ENCODE measurements at regions of chr5 and their contacts with region 1.

Region 1: DNA sequence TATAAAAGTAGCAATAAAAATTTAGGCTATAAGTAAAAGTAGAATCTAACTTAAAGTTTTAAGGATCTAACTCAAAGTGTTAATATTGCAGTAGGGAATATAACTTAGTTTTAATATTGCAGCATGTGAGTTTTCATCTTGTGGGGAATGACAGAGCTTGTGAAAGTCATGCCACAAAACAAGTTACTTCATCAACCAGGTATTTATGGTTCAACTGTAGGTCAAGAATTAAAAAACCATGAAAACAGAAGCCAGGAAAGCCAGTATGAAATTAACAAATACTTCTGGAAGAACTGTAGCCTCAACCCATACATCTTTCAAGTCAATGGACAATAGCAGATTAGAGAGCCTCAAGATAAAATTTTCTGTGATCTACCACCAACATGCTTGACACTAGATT is 19.0 kb downstream of the HMGCS1 start:
- DNase-seq: no peak
- CTCF ChIP-seq: no peak

Region 2: GRCh38 chr5:43268188-43268820 is 25.9 kb before region 1 on chr5:
- CTCF ChIA-PET with region 1: no interaction called
- POLR2A ChIA-PET with region 1: no interaction called
- DNase-seq: no peak
- CTCF ChIP-seq: no peak

Region 3: GRCh38 chr5:43305948-43306565 is 11.8 kb after region 1 on chr5:
- CTCF ChIA-PET with region 1: interaction called, 12 read pairs
- POLR2A ChIA-PET with region 1: interaction called, 3 read pairs
- DNase-seq: peak; percentile 39
- CTCF ChIP-seq: peak; percentile 57